ENCODE measurements at regions of chrX and their contacts with region 1.

Region 1: GRCh38 chrX:38327007-38327774 is at the start of gene RPGR:
- DNase-seq: peak; percentile 93 to 97 (median 97)
- H3K4me3 ChIP-seq: peak within 1 kb of the TSS; percentile 59 to 86 (median 73)
- H3K27ac ChIP-seq: peak within 1 kb of the TSS; percentile 91 to 95
- H3K4me1 ChIP-seq: peaks cover 4 to 16% (median 6%) of the 10 kb centered on the region in 4 experiments
- H3K27me3 ChIP-seq: no peaks in the 10 kb centered on the region

Region 2: GRCh38 chrX:38220024-38220414 is 107.2 kb before region 1 on chrX:
- CTCF ChIA-PET with region 1: no interaction called
- POLR2A ChIA-PET with region 1: no interaction called
- DNase-seq: peak; percentile 38 to 56 (median 50)
- H3K4me3 ChIP-seq: peak overlapping the region in 6 of 7 experiments; percentile 33 to 75 (median 54)
- H3K27ac ChIP-seq: no peak overlapping the region
- H3K4me1 ChIP-seq: peaks cover 0 to 18% (median 7%) of the 10 kb centered on the region in 4 experiments
- H3K27me3 ChIP-seq: peaks cover 2 to 62% (median 15%) of the 10 kb centered on the region in 5 experiments

Region 3: DNA sequence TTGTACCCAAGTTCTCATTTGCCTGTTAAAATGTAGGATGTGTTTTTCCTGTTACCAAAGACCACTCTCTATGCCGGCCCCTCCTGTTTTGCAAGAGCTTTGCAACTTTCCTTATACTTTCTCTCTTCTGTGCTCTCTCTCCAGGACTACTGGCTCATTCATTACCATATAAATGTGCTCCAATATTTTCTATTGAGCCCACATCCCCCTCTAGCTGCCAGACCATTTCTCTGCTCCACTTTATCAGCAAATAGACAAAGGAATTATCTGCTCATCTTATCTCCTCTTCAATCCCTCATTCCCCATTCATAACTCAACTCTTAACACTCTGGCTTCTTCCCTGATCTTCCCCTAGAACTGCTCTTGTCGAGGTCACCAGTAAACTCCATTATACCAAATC is 33.5 kb before region 1 on chrX:
- CTCF ChIA-PET with region 1: interaction called, 10 read pairs
- POLR2A ChIA-PET with region 1: no interaction called
- DNase-seq: no peak
- H3K4me3 ChIP-seq: no peak overlapping the region
- H3K27ac ChIP-seq: no peak overlapping the region
- H3K4me1 ChIP-seq: no peaks in the 10 kb centered on the region
- H3K27me3 ChIP-seq: no peaks in the 10 kb centered on the region

Region 4: DNA sequence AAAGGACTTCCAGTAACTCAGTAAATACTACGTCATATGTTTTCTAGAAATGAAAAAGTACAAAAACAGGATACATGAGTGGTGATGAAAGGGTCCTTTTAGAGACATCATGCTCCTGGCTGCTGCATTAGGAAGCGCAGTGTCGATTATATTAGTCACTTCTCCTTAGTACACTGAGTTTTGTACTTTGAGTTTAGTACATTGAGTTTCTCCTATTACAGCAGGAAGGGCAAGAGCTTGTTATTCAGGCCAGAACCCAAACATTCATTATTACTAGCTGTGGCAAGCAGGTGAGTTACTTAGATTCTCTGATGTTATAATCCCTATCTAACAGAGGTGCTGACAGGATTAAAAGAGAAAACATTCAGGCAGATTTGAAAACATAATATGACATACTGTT is 21.2 kb before region 1 on chrX:
- CTCF ChIA-PET with region 1: interaction called, 11 read pairs
- POLR2A ChIA-PET with region 1: no interaction called
- DNase-seq: peak in 1 of 3 donors; percentile 3
- H3K4me3 ChIP-seq: no peak overlapping the region
- H3K27ac ChIP-seq: no peak overlapping the region
- H3K4me1 ChIP-seq: no peaks in the 10 kb centered on the region
- H3K27me3 ChIP-seq: no peaks in the 10 kb centered on the region

Region 5: DNA sequence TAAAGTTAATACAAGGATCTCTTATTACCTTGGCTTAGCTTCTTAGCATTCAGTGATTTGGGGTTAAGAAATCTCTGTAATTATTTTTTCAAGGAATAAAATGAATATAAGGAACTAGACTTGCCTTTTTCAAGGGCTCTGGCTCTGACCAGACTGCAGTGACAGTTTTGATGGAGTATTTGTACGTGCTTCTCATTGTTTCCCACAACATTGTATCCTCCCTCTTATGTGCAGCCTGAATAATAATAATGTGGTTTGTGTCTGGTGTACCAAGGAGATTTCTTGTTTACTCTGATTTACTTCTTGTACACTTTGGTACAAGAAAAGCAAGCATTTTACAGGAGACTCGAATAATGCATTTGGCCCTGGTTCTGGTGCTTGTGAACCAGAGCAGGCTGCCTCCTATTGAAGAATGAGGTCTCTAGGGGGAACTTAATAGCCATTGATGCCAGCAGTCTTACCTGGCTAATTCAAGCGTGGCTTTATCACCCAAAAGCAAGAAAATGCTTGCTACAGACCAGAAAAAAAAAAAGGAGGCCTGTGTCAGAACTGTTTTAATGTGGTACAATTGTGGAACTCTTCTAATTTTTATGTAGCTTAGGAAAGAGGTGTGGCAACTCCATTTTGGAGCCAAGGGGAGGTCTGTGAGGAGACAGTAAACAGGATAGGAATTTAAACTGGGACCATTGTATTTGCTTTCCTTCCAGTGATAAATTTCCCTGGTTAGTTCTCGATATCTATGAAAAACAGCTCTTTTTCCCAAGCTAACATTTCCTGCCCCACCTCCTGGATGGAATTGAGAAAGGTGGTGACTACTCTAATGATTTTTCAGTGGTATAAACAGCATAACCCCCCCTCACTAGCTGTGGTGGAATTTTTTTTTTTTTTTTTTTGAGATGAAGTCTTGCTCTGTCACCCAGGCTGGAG is 30.8 kb after region 1 on chrX:
- CTCF ChIA-PET with region 1: no interaction called
- POLR2A ChIA-PET with region 1: no interaction called
- DNase-seq: no peak
- H3K4me3 ChIP-seq: no peak overlapping the region
- H3K27ac ChIP-seq: no peak overlapping the region
- H3K4me1 ChIP-seq: no peaks in the 10 kb centered on the region
- H3K27me3 ChIP-seq: no peaks in the 10 kb centered on the region

Region 6: GRCh38 chrX:38654302-38654701 is 327.1 kb after region 1 on chrX:
- CTCF ChIA-PET with region 1: no interaction called
- POLR2A ChIA-PET with region 1: no interaction called
- DNase-seq: peak; percentile 39 to 58 (median 52)
- H3K4me3 ChIP-seq: no peak overlapping the region
- H3K27ac ChIP-seq: no peak overlapping the region
- H3K4me1 ChIP-seq: peaks cover 0 to 13% (median 7%) of the 10 kb centered on the region in 4 experiments
- H3K27me3 ChIP-seq: no peaks in the 10 kb centered on the region

Measured in common myeloid progenitor, CD34-positive (primary cell).